Mammary epithelial cell (primary cell): ENCODE measurements at regions of chr3 and their contacts with region 1.

Region 1: GRCh38 chr3:118884748-118885206 is 149.9 kb downstream of the IGSF11 start:
- DNase-seq: peak; percentile 23
- H3K4me3 ChIP-seq: no peak overlapping the region
- H3K27ac ChIP-seq: no peak overlapping the region
- H3K4me1 ChIP-seq: no peaks in the 10 kb centered on the region
- H3K27me3 ChIP-seq: peaks cover 5% of the 10 kb centered on the region
- CTCF ChIP-seq: peak; percentile 91 to 96

Region 2: GRCh38 chr3:118269537-118270125 is 615.1 kb before region 1 on chr3:
- CTCF ChIA-PET with region 1: no interaction called
- dilution Hi-C with region 1: no loop called
- in situ Hi-C with region 1: no loop called
- intact Hi-C with region 1: no loop called
- DNase-seq: no peak
- H3K4me3 ChIP-seq: no peak overlapping the region
- H3K27ac ChIP-seq: no peak overlapping the region
- H3K4me1 ChIP-seq: peaks cover 3% of the 10 kb centered on the region
- H3K27me3 ChIP-seq: no peaks in the 10 kb centered on the region
- CTCF ChIP-seq: no peak

Region 3: GRCh38 chr3:118628704-118629341 is 256.0 kb before region 1 on chr3:
- CTCF ChIA-PET with region 1: no interaction called
- dilution Hi-C with region 1: no loop called
- in situ Hi-C with region 1: no loop called
- intact Hi-C with region 1: no loop called
- DNase-seq: peak; percentile 52
- H3K4me3 ChIP-seq: no peak overlapping the region
- H3K27ac ChIP-seq: no peak overlapping the region
- H3K4me1 ChIP-seq: no peaks in the 10 kb centered on the region
- H3K27me3 ChIP-seq: no peaks in the 10 kb centered on the region
- CTCF ChIP-seq: peak; percentile 95 to 96

Region 4: DNA sequence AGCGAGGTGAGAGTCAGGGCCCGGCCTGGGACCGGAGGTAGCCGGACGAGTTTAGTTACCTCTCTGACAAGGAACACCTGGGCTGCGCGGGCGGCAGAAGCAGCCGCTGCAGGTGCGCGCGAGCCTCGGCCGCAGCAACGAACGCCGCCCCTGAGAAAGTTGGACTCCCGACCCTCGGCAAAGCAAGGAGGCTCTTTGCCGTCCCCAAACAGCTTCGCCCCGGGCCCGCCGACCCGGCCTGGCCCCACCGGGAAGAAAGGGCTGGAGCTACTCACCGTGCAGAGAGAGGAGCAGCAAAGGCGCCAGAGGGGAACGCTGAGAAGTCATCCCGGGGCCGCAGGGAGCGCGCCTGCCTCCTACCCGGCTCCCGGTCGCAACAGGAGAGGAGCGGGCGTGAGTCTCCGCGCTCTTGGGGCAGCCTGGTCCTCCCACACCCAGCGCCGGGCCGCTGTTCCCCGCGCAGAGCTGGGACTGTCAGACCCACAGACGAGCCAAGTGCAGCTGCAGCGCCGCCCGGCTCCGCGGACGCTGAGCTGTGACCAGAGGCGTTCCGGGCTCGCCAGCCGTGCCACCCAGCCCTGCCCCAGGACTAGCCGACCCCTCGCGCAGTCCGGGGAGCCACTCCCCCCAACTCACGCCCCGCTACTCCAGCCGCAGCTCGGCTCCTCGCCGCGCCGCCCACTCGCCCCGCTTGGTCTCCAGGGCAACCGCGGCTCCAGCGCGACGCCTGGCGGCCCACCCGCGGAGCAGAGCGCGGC is 149.7 kb after region 1 on chr3 and contains the start of gene IGSF11:
- CTCF ChIA-PET with region 1: no interaction called
- dilution Hi-C with region 1: no loop called
- in situ Hi-C with region 1: no loop called
- intact Hi-C with region 1: loop called (anchors 1 kb)
- DNase-seq: peak; percentile 40
- H3K4me3 ChIP-seq: peak within 1 kb of the TSS; percentile 48 to 60 (median 52)
- H3K27ac ChIP-seq: no peak within 1 kb of the TSS
- H3K4me1 ChIP-seq: peaks cover 12% of the 10 kb centered on the region
- H3K27me3 ChIP-seq: peaks cover 21% of the 10 kb centered on the region
- CTCF ChIP-seq: peak in 1 of 2 donors; percentile 37
- total RNA-seq, gene IGSF11: 0.19 TPM in 1 of 2 donors, not detected in the other

Region 5: DNA sequence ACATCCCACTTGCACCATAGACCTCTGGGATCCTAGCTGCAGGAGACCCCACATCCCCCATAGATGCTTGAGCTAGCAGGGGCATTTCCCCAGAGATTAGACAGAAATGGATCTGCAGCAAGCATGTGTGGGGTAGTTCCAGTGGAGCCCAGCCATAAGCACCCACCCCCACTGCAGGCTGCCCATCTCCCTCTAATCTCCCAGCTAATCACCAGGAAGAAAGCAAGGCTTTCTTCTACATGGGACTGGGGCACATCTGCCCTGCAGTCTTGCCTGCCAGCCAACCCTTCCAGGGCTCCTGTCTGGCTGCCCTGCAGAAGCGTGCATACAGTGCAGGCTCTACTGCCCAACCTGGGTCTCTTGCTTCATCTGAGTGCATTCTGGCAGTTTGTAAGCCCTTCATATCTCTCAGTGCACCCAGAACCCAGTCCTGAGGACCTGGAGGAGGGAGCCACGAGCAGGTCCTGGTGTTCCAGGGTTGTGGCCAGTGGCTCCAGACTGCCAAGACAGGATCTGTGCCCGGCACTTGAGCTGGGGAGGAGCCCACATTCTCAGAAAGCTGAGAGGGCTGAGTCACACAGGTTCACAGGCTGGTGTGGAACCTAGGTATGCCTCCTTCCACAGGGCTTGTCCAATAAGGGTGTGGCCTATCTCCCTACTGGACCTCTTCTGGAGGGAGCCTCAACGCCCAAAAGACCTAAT is 199.7 kb after region 1 on chr3:
- CTCF ChIA-PET with region 1: interaction called, 12 read pairs
- dilution Hi-C with region 1: no loop called
- in situ Hi-C with region 1: loop called in 1 of 2 experiments (anchors 10 kb)
- intact Hi-C with region 1: no loop called
- DNase-seq: peak; percentile 41
- H3K4me3 ChIP-seq: no peak overlapping the region
- H3K27ac ChIP-seq: no peak overlapping the region
- H3K4me1 ChIP-seq: no peaks in the 10 kb centered on the region
- H3K27me3 ChIP-seq: no peaks in the 10 kb centered on the region
- CTCF ChIP-seq: no peak

Region 6: GRCh38 chr3:119098619-119099222 is 213.9 kb after region 1 on chr3:
- CTCF ChIA-PET with region 1: interaction called, 4 read pairs
- dilution Hi-C with region 1: no loop called
- in situ Hi-C with region 1: loop called in 1 of 2 experiments (anchors 5 kb)
- intact Hi-C with region 1: loop called (anchors 1 kb)
- DNase-seq: peak; percentile 23
- H3K4me3 ChIP-seq: no peak overlapping the region
- H3K27ac ChIP-seq: no peak overlapping the region
- H3K4me1 ChIP-seq: no peaks in the 10 kb centered on the region
- H3K27me3 ChIP-seq: no peaks in the 10 kb centered on the region
- CTCF ChIP-seq: peak; percentile 72 to 78

Region 7: DNA sequence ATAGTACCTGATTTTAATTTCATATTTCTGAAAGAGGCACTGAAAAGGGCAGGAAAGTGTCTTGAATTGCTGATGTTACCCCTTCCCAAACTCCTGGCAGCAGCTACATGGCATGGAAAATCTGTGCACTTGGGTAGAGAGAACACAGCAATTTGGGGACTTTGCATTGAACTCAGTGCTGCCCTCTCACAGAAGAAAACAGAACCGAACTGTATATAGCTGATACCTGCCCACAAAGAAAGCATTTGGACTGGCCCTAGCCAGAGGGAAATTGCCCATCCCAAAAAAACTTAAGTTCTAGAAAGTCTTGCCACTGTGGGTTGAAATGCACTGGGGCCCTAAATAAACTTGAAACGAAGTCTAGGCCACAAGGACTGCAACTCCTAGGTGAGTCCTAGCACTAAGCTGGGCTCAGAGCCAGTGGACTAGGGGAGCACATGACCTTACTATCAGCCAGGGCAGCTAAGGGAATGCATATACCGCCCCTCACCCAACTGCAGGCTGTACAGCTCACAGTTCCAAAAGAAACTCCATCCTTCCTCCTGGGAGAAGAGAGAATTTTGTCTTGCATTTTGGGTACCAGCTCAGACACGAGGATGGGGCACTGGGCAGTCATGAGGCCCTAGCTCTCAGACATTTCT is 237.5 kb after region 1 on chr3:
- CTCF ChIA-PET with region 1: no interaction called
- dilution Hi-C with region 1: loop called (anchors 10 kb)
- in situ Hi-C with region 1: no loop called
- intact Hi-C with region 1: no loop called
- DNase-seq: no peak
- H3K4me3 ChIP-seq: no peak overlapping the region
- H3K27ac ChIP-seq: no peak overlapping the region
- H3K4me1 ChIP-seq: no peaks in the 10 kb centered on the region
- H3K27me3 ChIP-seq: no peaks in the 10 kb centered on the region
- CTCF ChIP-seq: no peak

Region 8: GRCh38 chr3:119206611-119207511 is 322.1 kb after region 1 on chr3:
- CTCF ChIA-PET with region 1: no interaction called
- dilution Hi-C with region 1: no loop called
- in situ Hi-C with region 1: no loop called
- intact Hi-C with region 1: loop called (anchors 1 kb)
- DNase-seq: peak; percentile 61
- H3K4me3 ChIP-seq: no peak overlapping the region
- H3K27ac ChIP-seq: peak overlapping the region; percentile 3
- H3K4me1 ChIP-seq: peaks cover 18% of the 10 kb centered on the region
- H3K27me3 ChIP-seq: no peaks in the 10 kb centered on the region
- CTCF ChIP-seq: peak in 1 of 2 donors; percentile 41

Region 9: GRCh38 chr3:119352849-119353502 is 468.2 kb after region 1 on chr3:
- CTCF ChIA-PET with region 1: no interaction called
- dilution Hi-C with region 1: no loop called
- in situ Hi-C with region 1: loop called in 1 of 2 experiments (anchors 25 kb)
- intact Hi-C with region 1: no loop called
- DNase-seq: peak; percentile 11
- H3K4me3 ChIP-seq: no peak overlapping the region
- H3K27ac ChIP-seq: no peak overlapping the region
- H3K4me1 ChIP-seq: peaks cover 5% of the 10 kb centered on the region
- H3K27me3 ChIP-seq: no peaks in the 10 kb centered on the region
- CTCF ChIP-seq: peak; percentile 24 to 42